ENCODE measurements at regions of chr9 and their contacts with region 1.

Region 1: GRCh38 chr9:120714088-120714845 is at the start of gene MEGF9:
- DNase-seq: peak; percentile 99
- H3K4me3 Mint-ChIP-seq: peak within 1 kb of the TSS; percentile 84
- H3K27ac Mint-ChIP-seq: peak within 1 kb of the TSS; percentile 30
- H3K4me1 Mint-ChIP-seq: peaks cover 39% of the 10 kb centered on the region
- H3K27me3 Mint-ChIP-seq: no peaks in the 10 kb centered on the region
- total RNA-seq, gene MEGF9: 3.8 TPM

Region 2: GRCh38 chr9:120579750-120580590 is 134.3 kb before region 1 on chr9 and contains the start of gene CDK5RAP2:
- CTCF ChIA-PET with region 1: no interaction called
- intact Hi-C with region 1: loop called (anchors 1 kb)
- DNase-seq: peak; percentile 96
- H3K4me3 Mint-ChIP-seq: peak within 1 kb of the TSS; percentile 97
- H3K27ac Mint-ChIP-seq: peak within 1 kb of the TSS; percentile 92
- H3K4me1 Mint-ChIP-seq: peaks cover 47% of the 10 kb centered on the region
- H3K27me3 Mint-ChIP-seq: no peaks in the 10 kb centered on the region
- total RNA-seq, gene CDK5RAP2: 92.7 to 99.7 TPM

Region 3: GRCh38 chr9:120696551-120697230 is 17.6 kb before region 1 on chr9:
- CTCF ChIA-PET with region 1: no interaction called
- intact Hi-C with region 1: loop called (anchors 1 kb)
- DNase-seq: no peak
- H3K4me3 Mint-ChIP-seq: no peak overlapping the region
- H3K27ac Mint-ChIP-seq: no peak overlapping the region
- H3K4me1 Mint-ChIP-seq: peaks cover 36% of the 10 kb centered on the region
- H3K27me3 Mint-ChIP-seq: no peaks in the 10 kb centered on the region

Region 4: DNA sequence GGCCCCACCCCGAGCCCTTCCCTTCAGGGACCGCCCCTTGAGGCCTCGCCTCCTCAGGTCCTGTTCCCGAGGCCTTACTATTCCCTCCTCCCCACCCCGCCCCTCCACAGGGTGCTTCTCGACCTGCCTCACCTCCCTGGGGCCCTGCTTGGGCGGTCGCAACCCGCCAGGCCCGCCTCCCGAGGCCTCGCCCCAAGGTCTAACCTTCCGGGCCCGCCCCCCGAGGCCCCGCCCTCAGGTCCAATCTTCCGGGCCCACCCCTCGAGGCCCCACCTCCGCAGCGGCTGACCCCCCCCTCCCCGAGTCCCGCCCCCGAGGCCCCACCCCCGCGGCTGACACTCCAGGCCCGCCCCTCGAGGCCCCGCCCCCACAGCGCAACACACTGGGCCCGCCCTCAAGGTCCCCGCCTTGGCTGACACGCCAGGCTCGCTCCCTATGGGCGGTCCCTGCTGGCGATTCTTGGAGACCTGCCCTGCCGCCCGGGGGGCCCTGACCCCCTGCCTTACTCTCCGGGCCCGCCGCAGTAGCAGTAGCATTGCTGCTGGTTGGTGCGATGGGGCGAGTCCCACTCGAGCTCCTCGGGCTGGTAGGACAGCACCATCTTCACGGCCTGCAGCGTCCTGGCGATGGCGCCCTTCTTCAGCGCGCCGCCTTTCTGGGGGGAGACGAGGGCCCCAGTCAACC is 154.6 kb after region 1 on chr9:
- CTCF ChIA-PET with region 1: no interaction called
- intact Hi-C with region 1: loop called (anchors 1 kb)
- DNase-seq: peak; percentile 97
- H3K4me3 Mint-ChIP-seq: peak overlapping the region; percentile 74
- H3K27ac Mint-ChIP-seq: peak overlapping the region; percentile 87
- H3K4me1 Mint-ChIP-seq: peaks cover 49% of the 10 kb centered on the region
- H3K27me3 Mint-ChIP-seq: no peaks in the 10 kb centered on the region

Region 5: GRCh38 chr9:121121582-121122087 is 407.4 kb after region 1 on chr9:
- CTCF ChIA-PET with region 1: no interaction called
- intact Hi-C with region 1: loop called (anchors 2 kb)
- DNase-seq: peak; percentile 99
- H3K4me3 Mint-ChIP-seq: peak overlapping the region; percentile 73
- H3K27ac Mint-ChIP-seq: peak overlapping the region; percentile 91
- H3K4me1 Mint-ChIP-seq: peaks cover 44% of the 10 kb centered on the region
- H3K27me3 Mint-ChIP-seq: no peaks in the 10 kb centered on the region

Measured in activated naive CD4-positive, alpha-beta T cell treated with anti-CD3 and anti-CD28 coated beads for 36 hours (primary cell).